Panc1 (cell line): ENCODE measurements at regions of chr15 and their contacts with region 1.

Region 1: GRCh38 chr15:88769161-88769971 is 33.9 kb upstream of the ACAN start:
- DNase-seq: no peak
- ATAC-seq: peak; percentile 86
- H3K4me3 ChIP-seq: peak overlapping the region; percentile 3 to 40; a peak in 2 of 4 replicates
- H3K27ac ChIP-seq: no peak overlapping the region
- H3K4me1 ChIP-seq: no peaks in the 10 kb centered on the region
- H3K27me3 ChIP-seq: peaks cover 17% of the 10 kb centered on the region
- CTCF ChIP-seq: no peak

Region 2: GRCh38 chr15:88680241-88681001 is 88.9 kb before region 1 on chr15:
- CTCF ChIA-PET with region 1: interaction called, 10 read pairs
- POLR2A ChIA-PET with region 1: no interaction called
- in situ Hi-C with region 1: no loop called
- intact Hi-C with region 1: no loop called
- DNase-seq: no peak
- ATAC-seq: no peak
- H3K4me3 ChIP-seq: no peak overlapping the region
- H3K27ac ChIP-seq: no peak overlapping the region
- H3K4me1 ChIP-seq: no peaks in the 10 kb centered on the region
- H3K27me3 ChIP-seq: peaks cover under 1% of the 10 kb centered on the region; the same call in 1 of the 2 replicates
- CTCF ChIP-seq: no peak